Dorsolateral prefrontal cortex (tissue), 120 donors: ENCODE measurements at regions of chr10 and their contacts with region 1.

Region 1: GRCh38 chr10:127968027-127968441 is 61.1 kb downstream of the PTPRE start:
- DNase-seq: no peak
- H3K4me3 ChIP-seq: peak overlapping the region in 1 of 59 donors; percentile 6
- H3K27ac ChIP-seq: peak overlapping the region in 13 of 59 donors; percentile 1 to 69 (median 38)
- H3K27me3 ChIP-seq: no peaks in the 10 kb centered on the region
- CTCF ChIP-seq: no peak

Region 2: GRCh38 chr10:127919418-127920271 is 48.4 kb before region 1 on chr10:
- intact Hi-C with region 1: loop called in 1 of 2 experiments (anchors 5 kb)
- DNase-seq: peak in 4 of 10 donors; percentile 39 to 71 (median 61)
- H3K4me3 ChIP-seq: no peak overlapping the region
- H3K27ac ChIP-seq: peak overlapping the region in 49 of 59 donors; percentile 7 to 81 (median 53)
- H3K27me3 ChIP-seq: no peaks in the 10 kb centered on the region
- CTCF ChIP-seq: peak in 36 of 56 donors; percentile 7 to 56 (median 26)